ENCODE measurements at regions of chr18 and their contacts with region 1.

Region 1: DNA sequence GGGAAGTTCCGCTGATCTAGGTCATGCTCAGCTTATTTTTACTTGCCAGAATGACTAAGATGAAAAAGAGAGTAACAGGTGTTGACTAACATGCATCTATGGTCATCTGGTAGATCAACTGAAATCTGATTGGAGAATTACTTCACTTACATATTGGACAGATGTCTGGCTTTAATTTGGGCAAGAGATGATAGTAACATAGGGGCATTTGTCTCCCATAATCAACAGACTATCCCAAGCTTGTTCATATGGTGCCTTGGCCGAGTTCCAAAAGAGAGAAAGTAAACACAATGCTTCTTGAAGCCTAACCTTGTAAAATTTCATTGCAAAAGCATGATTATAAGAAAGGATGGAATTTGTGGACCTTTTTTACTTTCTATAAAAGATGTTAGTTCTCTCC is 503.7 kb downstream of the ADCYAP1 start:
- DNase-seq: no peak
- H3K4me3 ChIP-seq: no peak overlapping the region
- H3K27ac ChIP-seq: no peak overlapping the region
- H3K4me1 ChIP-seq: no peaks in the 10 kb centered on the region
- H3K27me3 ChIP-seq: no peaks in the 10 kb centered on the region
- CTCF ChIP-seq: no peak

Region 2: DNA sequence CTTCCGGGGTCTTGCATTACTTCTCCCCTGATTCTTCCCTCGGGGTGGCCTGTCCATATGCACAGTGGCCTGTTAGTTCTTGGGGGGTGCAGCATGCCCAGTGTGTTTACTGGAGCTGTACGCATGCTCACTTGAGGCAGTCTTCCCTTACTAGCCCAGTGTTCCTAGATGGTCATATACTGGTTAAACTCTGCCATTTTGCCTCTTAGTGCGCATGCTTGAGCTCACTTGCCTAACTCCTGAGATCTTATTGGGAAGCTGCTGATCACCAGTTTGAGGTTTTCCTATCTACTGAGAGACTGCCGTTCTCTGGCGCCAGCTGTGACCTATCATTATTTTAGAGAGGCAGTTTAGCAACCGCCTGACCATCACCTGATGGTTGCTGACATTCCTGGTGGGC is 67.5 kb after region 1 on chr18:
- CTCF ChIA-PET with region 1: no interaction called
- dilution Hi-C with region 1: loop called (anchors 5 kb)
- in situ Hi-C with region 1: no loop called
- intact Hi-C with region 1: no loop called
- DNase-seq: no peak
- H3K4me3 ChIP-seq: no peak overlapping the region
- H3K27ac ChIP-seq: no peak overlapping the region
- H3K4me1 ChIP-seq: no peaks in the 10 kb centered on the region
- H3K27me3 ChIP-seq: no peaks in the 10 kb centered on the region
- CTCF ChIP-seq: no peak